Ovary (tissue), 10 donors: ENCODE measurements at regions of chr12 and their contacts with region 1.

Region 1: DNA sequence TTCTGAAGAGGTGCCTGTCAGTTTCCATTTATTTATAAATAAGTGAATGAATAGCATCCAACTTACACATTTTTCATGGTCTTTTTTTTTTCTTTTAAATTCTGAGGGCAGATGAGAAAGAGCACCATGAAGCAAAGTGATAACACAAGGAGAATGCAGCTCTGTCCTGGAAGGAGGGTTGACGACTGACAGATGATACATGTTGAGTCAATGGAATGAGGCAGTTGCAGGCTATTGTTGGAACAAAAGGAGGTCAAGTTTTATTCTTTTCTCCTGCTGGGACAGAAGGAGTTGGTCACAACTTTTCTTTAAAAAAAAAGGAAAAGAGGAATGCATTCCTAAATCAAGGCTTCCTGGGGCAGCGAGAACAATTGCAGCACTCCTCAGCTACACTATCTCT is 119.9 kb upstream of the PLEKHG7 start:
- DNase-seq: no peak
- H3K4me3 ChIP-seq: no peak overlapping the region
- H3K27ac ChIP-seq: no peak overlapping the region
- H3K4me1 ChIP-seq: no peaks in the 10 kb centered on the region
- H3K27me3 ChIP-seq: no peaks in the 10 kb centered on the region
- CTCF ChIP-seq: no peak
- EP300 ChIP-seq: no peak
- POLR2A ChIP-seq: no peak

Region 2: GRCh38 chr12:92278378-92278828 is 304.5 kb before region 1 on chr12:
- intact Hi-C with region 1: loop called in 1 of 4 experiments (anchors 1 kb)
- DNase-seq: no peak
- H3K4me3 ChIP-seq: no peak overlapping the region
- H3K27ac ChIP-seq: no peak overlapping the region
- H3K4me1 ChIP-seq: no peaks in the 10 kb centered on the region
- H3K27me3 ChIP-seq: no peaks in the 10 kb centered on the region
- CTCF ChIP-seq: no peak
- EP300 ChIP-seq: no peak
- POLR2A ChIP-seq: no peak